ENCODE measurements at regions of chr17 and their contacts with region 1.

Region 1: DNA sequence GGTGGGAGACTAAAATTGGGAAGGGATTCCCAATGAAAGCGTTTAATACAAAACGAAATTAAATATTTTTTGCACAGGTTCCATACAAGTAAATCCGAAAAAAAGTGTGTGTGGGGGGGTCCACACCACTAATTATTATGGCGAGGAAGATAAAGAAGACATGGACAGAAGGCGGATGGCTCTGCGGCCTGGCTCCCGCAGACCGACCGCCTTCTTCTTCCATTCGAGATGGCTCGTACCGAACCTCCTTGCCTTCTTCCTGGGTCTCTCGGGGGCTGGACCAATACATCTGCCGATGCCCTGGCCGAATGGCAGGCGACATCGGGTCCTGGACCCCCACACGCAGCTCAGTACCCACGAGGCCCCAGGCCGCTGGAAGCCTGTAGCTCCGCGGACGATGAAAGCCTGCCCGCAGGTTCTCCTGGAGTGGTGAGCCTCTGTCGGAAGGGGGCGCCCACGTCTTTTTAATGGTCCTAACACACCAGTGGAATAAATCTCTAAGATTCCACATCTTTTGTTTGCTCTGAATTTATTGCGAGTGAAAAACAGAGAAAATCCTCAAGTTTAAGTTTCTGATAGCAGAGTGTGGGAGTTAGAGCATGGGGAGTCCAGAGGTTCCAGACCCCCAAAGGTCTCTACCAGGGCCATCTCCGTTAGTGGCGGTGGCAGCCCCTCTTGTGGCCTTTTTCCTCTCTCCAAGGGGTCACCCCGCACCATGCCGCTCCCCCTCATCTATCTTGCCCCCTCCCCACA is 1.4 kb downstream of the PRAC2 start:
- DNase-seq: peak; percentile 32
- ATAC-seq: peak; percentile 74
- H3K4me3 ChIP-seq: no peak overlapping the region
- H3K27ac ChIP-seq: no peak overlapping the region
- H3K4me1 ChIP-seq: peaks cover 5 to 21% of the 10 kb centered on the region in 2 experiments; a peak in 3 of 4 replicates
- H3K27me3 ChIP-seq: no peaks in the 10 kb centered on the region
- CTCF ChIP-seq: peak; percentile 85 to 90 (median 87)
- POLR2A ChIP-seq: no peak
- RAD21 ChIP-seq: peak; percentile 91

Region 2: DNA sequence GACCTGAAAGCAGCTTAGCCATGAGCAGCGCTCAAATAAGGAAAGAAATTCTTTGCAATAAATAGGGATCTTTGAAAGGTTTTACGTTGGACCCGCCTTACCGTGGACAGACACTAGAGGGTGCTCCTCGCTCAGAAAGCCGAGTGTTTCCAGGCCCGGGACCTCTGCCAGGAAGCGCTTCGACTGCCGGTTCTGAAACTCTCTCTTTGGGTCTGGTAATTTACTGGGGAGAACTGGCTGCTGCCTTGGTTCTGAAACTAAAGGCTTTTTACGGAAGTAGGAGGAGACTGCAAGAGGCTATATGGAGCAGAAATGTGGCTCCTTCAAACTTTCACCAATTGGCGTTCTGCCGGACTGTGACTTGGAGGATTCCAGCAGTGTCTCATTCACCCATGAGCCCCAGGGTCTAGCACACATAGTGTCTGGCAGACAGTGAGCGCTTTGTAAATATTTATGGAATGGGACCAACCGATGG is 52.7 kb before region 1 on chr17:
- CTCF ChIA-PET with region 1: interaction called, 14 read pairs
- POLR2A ChIA-PET with region 1: no interaction called
- RAD21 ChIA-PET with region 1: interaction called in 1 of 2 experiments, 4 read pairs
- intact Hi-C with region 1: no loop called
- DNase-seq: peak; percentile 59
- ATAC-seq: peak; percentile 87
- H3K4me3 ChIP-seq: peak overlapping the region; percentile 21 to 52
- H3K27ac ChIP-seq: no peak overlapping the region
- H3K4me1 ChIP-seq: peaks cover 0 to 10% of the 10 kb centered on the region in 2 experiments; a peak in 3 of 4 replicates
- H3K27me3 ChIP-seq: no peaks in the 10 kb centered on the region
- CTCF ChIP-seq: peak; percentile 92 to 99 (median 98)
- POLR2A ChIP-seq: no peak
- RAD21 ChIP-seq: peak; percentile 94

Region 3: GRCh38 chr17:48704361-48705248 is 19.8 kb before region 1 on chr17:
- CTCF ChIA-PET with region 1: interaction called, 11 read pairs
- POLR2A ChIA-PET with region 1: no interaction called
- RAD21 ChIA-PET with region 1: no interaction called
- intact Hi-C with region 1: no loop called
- DNase-seq: no peak
- ATAC-seq: no peak
- H3K4me3 ChIP-seq: no peak overlapping the region
- H3K27ac ChIP-seq: no peak overlapping the region
- H3K4me1 ChIP-seq: no peaks in the 10 kb centered on the region
- H3K27me3 ChIP-seq: no peaks in the 10 kb centered on the region
- CTCF ChIP-seq: no peak
- POLR2A ChIP-seq: no peak
- RAD21 ChIP-seq: no peak

Region 4: DNA sequence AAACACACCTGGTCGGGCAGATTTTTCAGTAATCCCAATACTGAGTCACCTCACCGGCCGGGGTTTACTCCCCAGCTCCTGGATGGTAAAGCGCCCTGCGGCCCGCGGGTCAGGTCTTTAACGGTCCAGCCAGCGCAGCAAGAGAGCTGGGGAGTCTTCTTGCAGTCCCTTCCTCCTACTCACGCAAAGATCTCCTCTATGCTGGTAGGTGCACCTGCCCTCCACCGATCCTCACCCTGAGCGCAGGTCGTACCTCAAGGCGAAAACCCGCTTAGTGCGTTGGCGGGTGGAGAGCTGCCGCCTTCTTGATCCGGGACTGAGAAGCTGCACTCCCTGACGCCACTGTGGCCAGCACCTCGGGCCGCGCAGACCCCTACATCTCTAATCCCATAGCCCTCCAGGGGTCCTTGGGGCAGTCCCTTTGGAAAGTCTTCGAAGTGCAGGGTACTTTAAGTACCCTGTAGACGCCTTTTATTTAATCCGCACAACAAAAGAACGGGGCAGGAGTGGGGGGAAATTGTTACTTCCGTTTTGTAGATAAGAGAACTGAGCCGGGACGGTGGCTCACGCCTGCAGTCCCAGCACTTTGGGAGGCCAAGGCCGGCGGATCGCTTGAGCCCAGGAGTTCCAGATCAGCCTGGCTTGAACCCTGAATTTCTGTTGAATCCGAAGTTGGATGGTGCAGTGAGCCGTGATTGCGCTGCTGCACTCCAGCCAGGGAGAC is 14.5 kb after region 1 on chr17:
- CTCF ChIA-PET with region 1: interaction called, 11 read pairs
- POLR2A ChIA-PET with region 1: no interaction called
- RAD21 ChIA-PET with region 1: interaction called in 1 of 2 experiments, 4 read pairs
- intact Hi-C with region 1: no loop called
- DNase-seq: no peak
- ATAC-seq: no peak
- H3K4me3 ChIP-seq: no peak overlapping the region
- H3K27ac ChIP-seq: no peak overlapping the region
- H3K4me1 ChIP-seq: no peaks in the 10 kb centered on the region
- H3K27me3 ChIP-seq: peaks cover 54% of the 10 kb centered on the region; the same call in 1 of the 2 replicates
- CTCF ChIP-seq: no peak
- POLR2A ChIP-seq: no peak
- RAD21 ChIP-seq: no peak

Region 5: DNA sequence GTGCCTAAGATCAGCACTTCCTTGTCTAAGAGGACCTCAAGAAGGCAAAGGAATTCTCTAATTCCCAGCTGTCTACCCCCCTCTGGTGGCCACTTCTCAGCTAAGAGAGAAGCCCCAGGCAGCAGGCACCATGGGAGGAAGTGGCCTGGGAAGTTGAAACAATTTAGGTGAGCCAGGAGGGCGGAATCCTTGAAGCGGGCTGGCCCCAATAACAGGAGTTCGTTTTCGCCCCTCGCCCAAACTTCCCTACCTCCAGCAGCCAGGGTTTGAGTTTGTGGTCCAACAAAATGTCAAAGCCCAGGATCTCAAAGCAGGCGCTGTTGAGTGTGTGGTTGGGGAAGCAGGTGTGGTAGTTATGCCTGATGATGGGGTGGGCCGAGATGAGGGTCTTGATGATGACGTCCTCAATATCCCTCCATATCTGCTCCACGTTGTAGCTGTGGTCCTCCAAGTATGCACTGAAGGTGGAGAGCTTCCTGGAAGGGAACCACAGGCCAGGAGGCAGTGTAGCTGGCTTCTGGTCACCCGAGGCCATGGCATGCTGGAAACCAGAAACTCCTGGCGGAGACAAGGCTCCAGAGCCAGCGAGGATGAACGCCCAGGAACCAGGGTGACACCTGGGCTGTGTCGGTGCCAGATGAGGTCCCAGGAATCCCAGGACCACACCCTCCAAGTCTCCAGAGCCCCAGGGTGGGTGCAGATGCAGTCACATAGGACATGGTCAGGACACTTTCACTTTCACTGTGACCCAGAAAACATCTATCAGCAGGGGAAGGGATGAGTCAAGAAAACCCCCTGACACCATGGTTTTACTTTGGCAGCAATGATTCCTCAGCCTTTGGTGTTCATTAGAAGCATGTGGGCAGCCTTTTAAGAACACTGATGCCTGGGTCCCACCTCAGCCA is 67.0 kb after region 1 on chr17:
- CTCF ChIA-PET with region 1: interaction called, 97 read pairs
- POLR2A ChIA-PET with region 1: interaction called, 7 read pairs
- RAD21 ChIA-PET with region 1: interaction called, 11 to 13 read pairs
- intact Hi-C with region 1: loop called (anchors 1 kb)
- DNase-seq: peak; percentile 87
- ATAC-seq: peak; percentile 92
- H3K4me3 ChIP-seq: no peak overlapping the region
- H3K27ac ChIP-seq: no peak overlapping the region
- H3K4me1 ChIP-seq: peaks cover 12 to 32% of the 10 kb centered on the region in 2 experiments
- H3K27me3 ChIP-seq: no peaks in the 10 kb centered on the region
- CTCF ChIP-seq: peak; percentile 94 to 98 (median 98)
- POLR2A ChIP-seq: no peak
- RAD21 ChIP-seq: peak; percentile 97

Region 6: DNA sequence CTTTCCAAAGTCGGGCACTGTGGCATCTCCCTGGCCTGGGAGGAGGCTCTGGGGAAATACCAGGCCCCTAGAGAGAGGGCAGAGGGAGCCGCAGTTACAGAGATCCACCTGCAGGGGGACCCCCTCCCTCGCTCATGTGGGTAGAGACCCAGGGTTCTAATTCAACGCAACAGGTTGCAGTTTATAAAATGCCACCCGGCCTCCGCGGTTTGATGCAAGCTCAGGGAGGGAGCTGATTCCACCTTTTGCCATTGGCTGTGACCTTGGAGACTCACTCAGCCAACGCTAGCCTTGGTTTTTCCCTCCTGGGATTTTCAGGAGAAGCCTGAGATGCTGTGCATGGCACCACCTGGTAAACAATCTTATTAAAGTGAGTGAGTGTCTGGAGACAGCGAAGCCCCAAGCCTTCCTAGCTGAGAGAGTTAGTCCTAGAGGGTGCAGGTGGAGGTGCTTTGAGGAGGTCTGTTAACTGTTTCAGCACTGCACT is 80.5 kb after region 1 on chr17:
- CTCF ChIA-PET with region 1: interaction called, 23 read pairs
- POLR2A ChIA-PET with region 1: no interaction called
- RAD21 ChIA-PET with region 1: interaction called in 1 of 2 experiments, 3 read pairs
- intact Hi-C with region 1: no loop called
- DNase-seq: peak; percentile 77
- ATAC-seq: peak; percentile 100
- H3K4me3 ChIP-seq: peak overlapping the region in 1 of 2 experiments; percentile 4; a peak in 2 of 4 replicates
- H3K27ac ChIP-seq: no peak overlapping the region
- H3K4me1 ChIP-seq: peaks cover 4 to 11% of the 10 kb centered on the region in 2 experiments; a peak in 3 of 4 replicates
- H3K27me3 ChIP-seq: no peaks in the 10 kb centered on the region
- CTCF ChIP-seq: peak; percentile 97 to 100 (median 100)
- POLR2A ChIP-seq: no peak
- RAD21 ChIP-seq: peak; percentile 99

Measured in HCT116 (cell line).